ENCODE measurements at regions of chr10 and their contacts with region 1.

Region 1: DNA sequence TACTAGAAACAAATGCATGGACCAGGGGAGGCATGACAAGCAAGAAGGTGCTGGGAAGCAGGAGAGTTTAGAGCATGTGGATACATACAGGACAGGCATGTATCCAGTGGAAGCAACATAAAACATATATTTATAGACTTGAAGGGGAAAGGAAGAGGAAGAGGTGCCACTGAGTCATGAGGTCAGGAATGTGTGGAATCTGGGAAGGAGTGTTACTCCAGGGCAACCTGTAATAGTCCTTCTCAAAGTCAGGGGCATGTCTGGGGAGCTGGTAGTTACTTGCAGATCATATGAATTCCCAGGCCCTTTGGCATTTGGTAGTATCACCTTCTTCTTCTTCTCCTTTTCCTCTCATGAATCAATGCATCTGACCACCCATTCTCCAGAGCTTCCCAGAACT is 246.6 kb downstream of the XPNPEP1 start:
- DNase-seq: no peak

Region 2: GRCh38 chr10:107952649-107953556 is 1723.8 kb before region 1 on chr10:
- intact Hi-C with region 1: loop called in 1 of 2 experiments (anchors 5 kb)
- DNase-seq: no peak

Measured in posterior vena cava (tissue), 2 donors.